ENCODE measurements at regions of chr9 and their contacts with region 1.

Region 1: GRCh38 chr9:94603259-94604160 is 9.9 kb upstream of the FBP2 start:
- H3K4me3 Mint-ChIP-seq: no peak overlapping the region
- H3K27ac Mint-ChIP-seq: no peak overlapping the region
- H3K4me1 Mint-ChIP-seq: peaks cover 11% of the 10 kb centered on the region
- H3K27me3 Mint-ChIP-seq: no peaks in the 10 kb centered on the region

Region 2: GRCh38 chr9:94554439-94555391 is 48.8 kb before region 1 on chr9 and contains the start of gene PCAT7:
- intact Hi-C with region 1: loop called (anchors 1 kb)
- H3K4me3 Mint-ChIP-seq: no peak within 1 kb of the TSS
- H3K27ac Mint-ChIP-seq: no peak within 1 kb of the TSS
- H3K4me1 Mint-ChIP-seq: peaks cover 5% of the 10 kb centered on the region
- H3K27me3 Mint-ChIP-seq: peaks cover 14% of the 10 kb centered on the region